Gastrocnemius medialis (tissue), 4 donors: ENCODE measurements at regions of chr6 and their contacts with region 1.

Region 1: DNA sequence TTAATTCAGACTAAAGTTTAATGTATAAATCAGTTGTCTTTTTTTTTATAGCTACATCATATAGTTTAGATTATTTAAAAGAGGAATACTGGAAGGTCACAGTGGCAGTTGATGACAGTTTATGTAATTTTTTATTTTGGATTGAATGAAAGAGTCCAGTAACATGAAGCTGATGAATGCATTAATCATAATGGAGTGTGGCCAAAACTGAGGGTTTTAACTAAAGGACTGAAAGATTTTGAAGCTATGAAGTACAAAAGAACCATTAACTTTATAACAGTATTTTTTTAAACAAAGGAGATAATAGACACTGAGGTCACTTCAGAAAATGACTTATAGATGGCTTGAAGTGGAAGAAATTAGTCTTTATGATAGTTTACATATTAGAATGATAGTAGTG is 41.3 kb downstream of the TRMT11 start:
- DNase-seq: no peak
- ATAC-seq: no peak
- H3K4me3 ChIP-seq: no peak overlapping the region
- H3K27ac ChIP-seq: no peak overlapping the region
- H3K4me1 ChIP-seq: no peaks in the 10 kb centered on the region
- H3K27me3 ChIP-seq: no peaks in the 10 kb centered on the region
- CTCF ChIP-seq: no peak
- POLR2A ChIP-seq: no peak

Region 2: GRCh38 chr6:125637207-125637606 is 390.4 kb before region 1 on chr6:
- in situ Hi-C with region 1: no loop called
- intact Hi-C with region 1: no loop called
- DNase-seq: no peak
- ATAC-seq: peak in 1 of 2 donors; percentile 69
- H3K4me3 ChIP-seq: no peak overlapping the region
- H3K27ac ChIP-seq: no peak overlapping the region
- H3K4me1 ChIP-seq: peaks cover 8 to 16% of the 10 kb centered on the region in 2 donors
- H3K27me3 ChIP-seq: no peaks in the 10 kb centered on the region
- CTCF ChIP-seq: no peak
- POLR2A ChIP-seq: no peak

Region 3: GRCh38 chr6:125986300-125987025 is 41.1 kb before region 1 on chr6 and contains the start of gene TRMT11:
- in situ Hi-C with region 1: no loop called
- intact Hi-C with region 1: loop called (anchors 2 kb)
- DNase-seq: peak; percentile 73 to 85
- ATAC-seq: peak; percentile 95 to 97
- H3K4me3 ChIP-seq: peak within 1 kb of the TSS; percentile 64 to 96 (median 92)
- H3K27ac ChIP-seq: peak within 1 kb of the TSS; percentile 71 to 82 (median 80)
- H3K4me1 ChIP-seq: peaks cover 3 to 12% of the 10 kb centered on the region in 2 donors
- H3K27me3 ChIP-seq: no peaks in the 10 kb centered on the region
- CTCF ChIP-seq: no peak
- POLR2A ChIP-seq: peak; percentile 44
- total RNA-seq, gene TRMT11: 2.5 to 10.2 (median 6.9) TPM